Naive thymus-derived CD4-positive, alpha-beta T cell (primary cell): ENCODE measurements at regions of chr19 and their contacts with region 1.

Region 1: DNA sequence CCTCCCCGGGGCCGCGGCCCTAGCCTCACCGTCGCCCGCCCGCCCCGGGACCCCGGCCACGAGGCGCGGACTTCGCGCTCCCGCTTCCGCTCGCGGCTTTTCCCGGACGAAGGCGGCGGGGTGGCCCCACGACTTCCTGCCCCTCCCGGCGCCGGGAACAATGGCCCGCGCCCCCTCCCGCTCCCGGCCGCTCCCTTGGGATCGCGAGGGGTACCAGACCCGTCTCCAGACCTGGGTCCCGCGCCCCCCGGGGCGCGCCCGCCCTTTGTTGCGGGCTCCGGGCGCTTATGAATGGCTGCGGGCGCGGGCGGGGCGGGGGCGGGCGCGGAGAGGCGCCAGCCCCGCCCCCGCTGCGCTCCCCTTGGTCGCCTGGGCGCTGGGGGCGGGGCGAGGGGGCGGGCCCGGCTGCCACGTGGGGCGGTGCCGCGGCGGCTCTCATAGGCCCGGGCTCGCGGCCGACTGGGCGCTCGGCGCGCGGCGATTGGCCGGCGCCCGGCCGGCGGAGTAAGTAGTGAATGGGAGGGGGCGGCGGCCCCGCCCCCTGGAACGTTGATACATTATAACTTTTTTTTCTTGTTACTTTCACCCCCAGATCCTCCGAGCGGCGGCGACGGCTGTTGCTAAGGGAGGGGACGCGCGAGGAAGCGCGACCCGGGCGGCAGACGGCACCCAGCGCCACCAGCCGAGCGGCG is 1.1 kb downstream of the MIDN start:
- DNase-seq: peak; percentile 88 to 97 (median 94)
- ATAC-seq: peak; percentile 74
- H3K4me3 ChIP-seq: peak overlapping the region; percentile 63
- H3K4me3 Mint-ChIP-seq: peak overlapping the region; percentile 80 to 95 (median 88)
- H3K27ac ChIP-seq: peak overlapping the region; percentile 94
- H3K27ac Mint-ChIP-seq: peak overlapping the region; percentile 62 to 95 (median 89)
- H3K4me1 ChIP-seq: peaks cover 22 to 27% of the 10 kb centered on the region in 2 donors
- H3K4me1 Mint-ChIP-seq: peaks cover 0 to 11% (median 10%) of the 10 kb centered on the region in 7 donors
- H3K27me3 ChIP-seq: no peaks in the 10 kb centered on the region
- H3K27me3 Mint-ChIP-seq: no peaks in the 10 kb centered on the region

Region 2: DNA sequence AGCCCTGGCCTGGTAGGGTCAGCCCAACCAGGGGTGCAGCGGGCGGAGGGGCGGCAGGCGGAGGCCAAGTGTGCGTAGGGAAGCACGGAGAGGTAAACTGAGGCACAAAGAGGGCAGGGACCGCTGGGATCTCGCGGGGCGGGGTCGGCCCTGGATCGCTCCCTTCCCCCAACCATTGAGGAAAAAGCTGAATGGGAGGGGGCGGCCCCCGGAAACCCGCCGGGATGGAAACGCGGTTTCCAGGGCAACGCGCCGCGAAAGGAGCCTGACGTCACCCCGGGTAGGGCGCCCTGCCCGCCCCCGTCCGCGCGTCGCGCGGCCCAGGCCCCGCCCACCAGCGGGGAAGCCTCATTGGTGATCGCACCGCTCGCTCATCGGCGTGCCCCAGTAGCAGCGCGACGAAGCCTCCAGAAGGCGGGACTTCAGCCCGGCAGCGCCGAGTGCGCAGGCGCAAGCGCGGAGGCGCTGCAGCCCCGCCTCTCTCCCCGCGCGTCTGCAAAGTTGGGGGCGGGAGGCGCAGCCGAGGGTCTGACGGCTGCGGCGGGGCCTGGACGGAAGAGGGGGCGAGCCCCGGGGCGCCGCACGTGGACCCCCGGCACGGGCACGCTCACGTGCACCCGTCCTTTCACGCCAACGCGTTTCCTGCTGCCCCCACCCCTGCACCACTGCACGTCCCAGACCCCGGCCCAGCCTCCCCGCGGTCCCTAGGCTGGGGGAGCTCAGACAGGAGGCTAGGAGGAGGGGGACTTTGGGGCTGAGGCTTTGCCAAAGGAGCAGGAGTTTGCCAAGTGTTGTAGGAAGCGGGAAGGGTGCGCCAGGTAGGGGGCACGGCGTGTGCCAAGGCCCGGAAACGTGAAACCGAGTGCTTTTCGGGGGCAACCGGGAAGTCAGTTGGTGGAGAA is 11.4 kb after region 1 on chr19:
- CTCF ChIA-PET with region 1: interaction called, 164 read pairs
- POLR2A ChIA-PET with region 1: interaction called, 366 read pairs
- intact Hi-C with region 1: loop called (anchors 1 kb)
- DNase-seq: peak; percentile 95 to 98 (median 96)
- ATAC-seq: peak; percentile 91
- H3K4me3 ChIP-seq: peak overlapping the region; percentile 95
- H3K4me3 Mint-ChIP-seq: peak overlapping the region; percentile 83 to 93 (median 88)
- H3K27ac ChIP-seq: peak overlapping the region; percentile 99
- H3K27ac Mint-ChIP-seq: peak overlapping the region; percentile 88 to 98 (median 96)
- H3K4me1 ChIP-seq: peaks cover 46 to 49% of the 10 kb centered on the region in 2 donors
- H3K4me1 Mint-ChIP-seq: peaks cover 34 to 65% (median 54%) of the 10 kb centered on the region in 7 donors
- H3K27me3 ChIP-seq: no peaks in the 10 kb centered on the region
- H3K27me3 Mint-ChIP-seq: no peaks in the 10 kb centered on the region

Region 3: GRCh38 chr19:1373534-1374249 is 124.2 kb after region 1 on chr19:
- CTCF ChIA-PET with region 1: interaction called, 8 read pairs
- POLR2A ChIA-PET with region 1: no interaction called
- intact Hi-C with region 1: loop called in 1 of 2 experiments (anchors 1 kb)
- DNase-seq: no peak
- ATAC-seq: no peak
- H3K4me3 ChIP-seq: no peak overlapping the region
- H3K4me3 Mint-ChIP-seq: no peak overlapping the region
- H3K27ac ChIP-seq: no peak overlapping the region
- H3K27ac Mint-ChIP-seq: no peak overlapping the region
- H3K4me1 ChIP-seq: no peaks in the 10 kb centered on the region
- H3K4me1 Mint-ChIP-seq: peaks cover 0 to 4% (median 0%) of the 10 kb centered on the region in 7 donors
- H3K27me3 ChIP-seq: no peaks in the 10 kb centered on the region
- H3K27me3 Mint-ChIP-seq: no peaks in the 10 kb centered on the region